ENCODE measurements at regions of chr3 and their contacts with region 1.

Region 1: GRCh38 chr3:13452490-13453335 is 27.4 kb upstream of the HDAC11 start:
- DNase-seq: peak; percentile 60
- ATAC-seq: peak; percentile 21
- H3K4me3 Mint-ChIP-seq: peak overlapping the region; percentile 80
- H3K27ac Mint-ChIP-seq: peak overlapping the region; percentile 82
- H3K4me1 Mint-ChIP-seq: peaks cover 22% of the 10 kb centered on the region
- H3K27me3 Mint-ChIP-seq: no peaks in the 10 kb centered on the region

Region 2: DNA sequence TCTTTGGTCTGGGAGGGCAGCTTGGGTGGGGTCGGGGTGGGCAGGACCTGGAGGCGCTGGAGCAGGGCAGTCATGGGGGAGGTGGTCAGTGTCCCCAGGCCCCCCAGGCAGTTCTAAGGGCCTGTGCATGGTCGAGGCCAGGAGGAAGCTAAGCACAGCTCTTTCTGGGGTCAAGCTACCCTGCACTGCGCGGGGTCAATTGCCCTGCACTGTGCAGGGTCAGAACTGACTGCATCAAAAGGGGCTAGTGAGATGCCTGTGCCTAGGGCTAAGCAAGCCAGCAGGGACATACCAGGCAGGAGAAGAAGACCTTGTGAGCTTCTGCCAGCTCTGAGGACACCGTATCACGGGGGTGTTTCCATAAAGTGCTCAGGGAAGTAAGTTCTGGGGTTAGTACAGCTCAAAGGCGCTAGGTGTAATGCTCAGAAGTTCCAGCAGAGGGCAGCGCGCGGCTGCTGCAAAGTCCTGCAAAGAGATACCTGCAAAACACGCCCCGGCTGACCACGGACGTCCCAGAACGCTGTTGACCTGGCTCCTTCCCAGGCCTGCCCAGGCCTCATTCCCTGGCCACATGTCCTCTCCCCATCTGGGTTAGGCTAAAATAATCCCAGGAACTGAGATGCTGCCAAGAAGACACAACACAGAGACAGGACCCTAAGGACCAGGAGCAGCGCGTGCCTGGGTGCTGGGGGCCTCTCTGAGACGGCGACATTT is 360.7 kb before region 1 on chr3:
- CTCF ChIA-PET with region 1: interaction called, 58 read pairs
- DNase-seq: peak; percentile 89
- ATAC-seq: peak; percentile 87
- H3K4me3 Mint-ChIP-seq: no peak overlapping the region
- H3K27ac Mint-ChIP-seq: peak overlapping the region; percentile 55
- H3K4me1 Mint-ChIP-seq: peaks cover 13% of the 10 kb centered on the region
- H3K27me3 Mint-ChIP-seq: peaks cover 22% of the 10 kb centered on the region

Region 3: DNA sequence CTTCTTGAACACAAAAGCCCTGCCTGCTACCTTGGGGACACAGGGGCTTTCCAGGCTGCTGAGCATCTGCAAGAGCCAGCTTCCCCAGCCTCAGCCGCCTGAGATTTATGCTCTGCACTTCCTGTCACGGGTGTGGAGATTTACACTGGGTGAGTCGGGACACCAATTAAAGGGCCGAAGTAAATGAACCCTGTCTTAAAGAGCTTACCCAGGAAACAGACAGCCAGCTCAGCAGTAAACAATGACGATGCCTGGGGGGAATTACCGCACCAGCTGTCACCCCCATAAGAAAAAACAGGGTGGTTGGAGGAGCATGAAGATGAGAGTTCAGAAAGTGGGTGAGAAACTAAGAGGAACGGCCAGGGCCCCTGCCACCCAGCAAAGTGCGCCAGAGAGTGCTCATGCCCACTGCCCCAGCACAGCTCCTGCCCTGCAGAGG is 342.0 kb before region 1 on chr3:
- CTCF ChIA-PET with region 1: no interaction called
- DNase-seq: no peak
- ATAC-seq: no peak
- H3K4me3 Mint-ChIP-seq: no peak overlapping the region
- H3K27ac Mint-ChIP-seq: no peak overlapping the region
- H3K4me1 Mint-ChIP-seq: peaks cover 5% of the 10 kb centered on the region
- H3K27me3 Mint-ChIP-seq: peaks cover 4% of the 10 kb centered on the region

Region 4: GRCh38 chr3:13353936-13354542 is 98.7 kb before region 1 on chr3:
- CTCF ChIA-PET with region 1: interaction called, 14 read pairs
- DNase-seq: no peak
- ATAC-seq: no peak
- H3K4me3 Mint-ChIP-seq: no peak overlapping the region
- H3K27ac Mint-ChIP-seq: peak overlapping the region; percentile 22
- H3K4me1 Mint-ChIP-seq: peaks cover 27% of the 10 kb centered on the region
- H3K27me3 Mint-ChIP-seq: no peaks in the 10 kb centered on the region

Region 5: DNA sequence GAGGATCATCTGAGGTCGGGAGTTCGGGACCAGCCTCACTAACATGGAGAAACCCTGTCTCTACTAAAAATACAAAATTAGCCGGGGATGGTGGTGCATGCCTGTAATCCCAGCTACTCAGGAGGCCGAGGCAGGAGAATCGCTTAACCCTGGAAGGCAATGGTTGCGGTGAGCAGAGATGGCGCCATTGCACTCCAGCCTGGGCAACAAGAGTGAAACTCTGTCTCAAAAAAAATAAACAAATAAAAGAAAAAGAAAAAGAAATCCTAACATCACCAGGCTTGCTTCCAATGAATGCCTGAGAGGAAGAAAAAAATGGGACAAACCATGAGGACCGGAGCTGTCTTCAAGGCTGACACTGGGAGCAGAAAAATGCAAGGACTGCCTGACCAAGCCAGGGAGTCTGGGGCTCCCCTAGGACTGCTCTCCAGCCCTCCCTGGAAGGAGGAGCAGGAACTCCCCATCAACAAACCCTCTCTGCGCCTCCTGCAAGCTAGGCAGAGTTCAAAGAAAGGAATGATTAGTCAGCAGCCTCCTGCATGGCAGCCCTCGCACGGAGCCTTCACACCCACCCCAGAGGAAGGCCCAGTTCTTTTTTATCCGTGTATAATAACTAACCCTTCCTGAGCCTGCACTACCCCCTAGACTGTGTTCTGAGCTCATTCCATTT is 88.0 kb before region 1 on chr3:
- CTCF ChIA-PET with region 1: no interaction called
- DNase-seq: no peak
- ATAC-seq: no peak
- H3K4me3 Mint-ChIP-seq: no peak overlapping the region
- H3K27ac Mint-ChIP-seq: peak overlapping the region; percentile 7
- H3K4me1 Mint-ChIP-seq: no peaks in the 10 kb centered on the region
- H3K27me3 Mint-ChIP-seq: no peaks in the 10 kb centered on the region

Region 6: GRCh38 chr3:13405614-13406013 is 47.1 kb before region 1 on chr3:
- CTCF ChIA-PET with region 1: interaction called, 11 read pairs
- DNase-seq: no peak
- ATAC-seq: no peak
- H3K4me3 Mint-ChIP-seq: no peak overlapping the region
- H3K27ac Mint-ChIP-seq: peak overlapping the region; percentile 28
- H3K4me1 Mint-ChIP-seq: peaks cover 24% of the 10 kb centered on the region
- H3K27me3 Mint-ChIP-seq: no peaks in the 10 kb centered on the region

Region 7: DNA sequence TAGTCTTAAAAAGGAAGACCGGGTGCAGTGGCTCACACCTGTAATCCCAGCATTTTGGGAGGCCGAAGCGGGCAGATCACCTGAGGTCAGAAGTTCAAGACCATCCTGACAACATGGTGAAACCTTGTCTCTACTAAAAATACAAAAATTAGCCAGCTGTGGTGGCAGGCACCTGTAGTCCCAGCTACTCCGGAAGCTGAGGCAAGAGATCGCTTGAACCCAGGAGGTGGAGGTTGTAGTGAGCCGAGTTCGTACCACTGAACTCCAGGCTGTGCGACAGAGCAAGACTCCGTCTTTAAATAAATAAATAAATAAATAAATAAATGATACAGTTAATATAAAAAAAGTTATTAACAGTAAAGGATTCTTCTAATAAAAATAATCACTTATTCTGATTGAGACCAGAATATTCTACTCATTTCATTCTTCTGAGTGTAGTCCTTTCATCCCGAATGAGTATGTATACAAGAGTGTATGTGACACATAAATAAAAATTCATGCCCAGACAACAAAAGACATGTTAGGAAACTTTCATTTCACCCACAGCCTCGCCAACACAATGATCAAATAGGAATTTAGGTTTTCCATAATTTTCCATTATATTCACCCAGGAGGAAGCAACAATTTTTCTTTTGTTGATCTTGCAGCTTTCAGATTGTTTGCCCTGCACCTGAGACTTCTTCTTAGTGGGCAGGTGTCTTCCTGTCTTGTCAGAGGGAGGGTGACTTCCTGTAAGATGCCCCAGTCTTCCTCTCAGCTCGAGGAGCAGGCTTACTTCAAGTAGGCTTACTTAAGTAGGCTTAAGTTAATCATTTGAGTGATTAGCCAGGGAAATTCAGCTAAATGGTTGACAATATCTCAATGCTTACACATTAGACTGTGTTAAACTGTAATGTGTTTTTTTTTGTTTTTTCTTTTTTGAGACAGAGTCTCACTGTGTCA is 24.8 kb before region 1 on chr3:
- CTCF ChIA-PET with region 1: interaction called, 18 read pairs
- DNase-seq: no peak
- ATAC-seq: peak; percentile 84
- H3K4me3 Mint-ChIP-seq: no peak overlapping the region
- H3K27ac Mint-ChIP-seq: peak overlapping the region; percentile 67
- H3K4me1 Mint-ChIP-seq: peaks cover 21% of the 10 kb centered on the region
- H3K27me3 Mint-ChIP-seq: no peaks in the 10 kb centered on the region

Region 8: GRCh38 chr3:13528217-13528867 is 75.6 kb after region 1 on chr3:
- CTCF ChIA-PET with region 1: no interaction called
- DNase-seq: no peak
- ATAC-seq: no peak
- H3K4me3 Mint-ChIP-seq: no peak overlapping the region
- H3K27ac Mint-ChIP-seq: no peak overlapping the region
- H3K4me1 Mint-ChIP-seq: no peaks in the 10 kb centered on the region
- H3K27me3 Mint-ChIP-seq: peaks cover 31% of the 10 kb centered on the region

Measured in activated CD8-positive, alpha-beta memory T cell treated with anti-CD3 and anti-CD28 coated beads, Interleukin-2, amount 10 ng/mL, durations not matched to agents 7 days and 5 days (primary cell).